ENCODE measurements at regions of chr5 and their contacts with region 1.

Region 1: DNA sequence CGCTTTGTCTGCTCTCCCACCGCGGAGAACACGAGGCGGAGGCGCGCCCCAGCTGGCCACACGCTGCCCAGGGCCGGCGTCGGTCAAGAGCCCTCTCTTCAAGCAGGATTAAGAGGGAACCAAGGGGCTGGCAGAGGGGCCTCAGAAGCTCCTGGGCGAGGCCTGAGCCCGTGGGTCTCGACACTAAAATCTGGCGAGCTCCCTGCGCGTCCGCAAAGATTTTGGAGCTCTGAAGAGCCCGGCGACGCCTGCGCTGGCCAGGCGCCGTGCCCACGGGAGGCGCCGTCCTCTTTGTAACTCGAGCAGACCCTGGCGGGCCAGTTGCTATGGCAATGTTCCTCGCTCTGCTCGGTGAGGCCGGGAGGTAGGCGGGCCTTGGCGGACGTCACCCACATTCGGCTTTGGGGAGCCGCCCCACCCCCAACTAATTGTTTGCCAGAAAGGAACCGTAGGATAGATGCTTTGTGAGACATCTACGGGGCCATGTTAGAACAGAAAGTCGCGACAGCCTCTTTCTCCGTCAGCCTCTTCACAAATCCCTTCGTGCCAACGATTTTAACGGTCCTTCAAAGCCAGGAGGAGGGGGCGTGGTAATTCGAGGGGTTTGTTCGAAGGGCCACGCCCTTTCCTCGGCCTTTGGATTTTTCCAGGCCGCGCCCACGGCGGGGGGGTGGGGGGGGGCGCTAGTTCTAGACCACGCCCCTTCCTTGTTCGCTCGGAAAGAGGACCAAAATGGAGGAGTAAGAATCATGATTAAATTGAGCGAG is 714 bp upstream of the CNOT8 start:
- DNase-seq: peak; percentile 87 to 95 (median 91)
- H3K4me3 ChIP-seq: peak overlapping the region; percentile 78 to 88
- H3K4me3 Mint-ChIP-seq: peak overlapping the region; percentile 89 to 97 (median 91)
- H3K27ac ChIP-seq: peak overlapping the region; percentile 94
- H3K27ac Mint-ChIP-seq: peak overlapping the region; percentile 93 to 99 (median 98)
- H3K4me1 ChIP-seq: peaks cover 36% of the 10 kb centered on the region
- H3K4me1 Mint-ChIP-seq: peaks cover 25 to 49% (median 33%) of the 10 kb centered on the region in 4 donors
- H3K27me3 ChIP-seq: no peaks in the 10 kb centered on the region
- H3K27me3 Mint-ChIP-seq: no peaks in the 10 kb centered on the region

Region 2: GRCh38 chr5:154647114-154647760 is 210.5 kb before region 1 on chr5:
- CTCF ChIA-PET with region 1: interaction called, 5 read pairs
- POLR2A ChIA-PET with region 1: interaction called, 4 read pairs
- intact Hi-C with region 1: loop called (anchors 1 kb)
- DNase-seq: no peak
- H3K4me3 ChIP-seq: peak overlapping the region in 1 of 2 donors; percentile 40
- H3K4me3 Mint-ChIP-seq: peak overlapping the region; percentile 69 to 85 (median 80)
- H3K27ac ChIP-seq: no peak overlapping the region
- H3K27ac Mint-ChIP-seq: peak overlapping the region in 3 of 7 donors; percentile 35 to 77 (median 47)
- H3K4me1 ChIP-seq: peaks cover 10% of the 10 kb centered on the region
- H3K4me1 Mint-ChIP-seq: peaks cover 1 to 16% (median 7%) of the 10 kb centered on the region in 4 donors
- H3K27me3 ChIP-seq: no peaks in the 10 kb centered on the region
- H3K27me3 Mint-ChIP-seq: peaks cover 13 to 24% of the 10 kb centered on the region in 2 donors

Region 3: DNA sequence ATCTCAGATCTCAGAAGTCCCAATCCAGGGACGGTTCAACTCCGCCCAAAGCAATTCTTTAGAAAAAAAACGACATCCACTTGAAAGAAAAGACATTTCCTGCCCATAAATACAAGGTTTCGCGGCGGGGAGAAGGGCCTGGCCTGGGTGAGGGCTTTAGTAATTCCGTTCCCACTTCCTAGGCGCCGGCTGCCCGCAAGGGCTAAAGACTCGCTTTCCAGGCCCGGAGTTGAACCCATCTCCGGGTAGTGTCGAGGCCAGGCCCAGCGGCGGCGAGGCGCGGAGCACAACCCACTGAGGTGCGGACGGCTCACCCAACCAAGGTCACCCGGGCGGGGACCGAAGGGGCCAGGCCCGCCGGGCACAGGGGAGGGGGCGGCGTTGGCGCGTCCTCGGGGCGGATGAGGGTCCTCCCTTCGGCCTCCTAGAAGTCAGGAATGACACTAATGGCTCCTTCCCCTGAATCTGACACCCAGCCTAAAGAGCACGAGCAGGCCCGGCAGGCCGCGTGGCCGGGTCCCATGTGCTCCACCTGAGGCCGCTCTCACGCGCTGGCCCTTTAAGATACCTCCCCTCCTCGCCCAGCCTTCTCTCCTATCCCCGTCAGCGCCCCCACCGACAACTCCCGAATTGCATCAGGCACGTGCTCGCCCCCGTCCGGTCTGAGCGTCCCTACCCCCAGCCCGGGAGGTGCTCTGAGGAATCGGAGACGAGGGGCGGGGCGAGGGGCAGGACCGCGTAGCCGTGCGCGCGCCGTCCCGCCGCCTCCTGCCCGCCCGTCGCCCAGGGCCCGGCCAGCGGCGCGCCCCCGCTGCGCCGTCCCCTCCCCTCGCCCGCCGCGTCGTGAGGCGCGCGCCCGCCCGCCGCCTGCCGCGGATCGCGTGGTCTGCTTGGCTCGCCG is 103.0 kb before region 1 on chr5:
- CTCF ChIA-PET with region 1: interaction called, 3 read pairs
- POLR2A ChIA-PET with region 1: interaction called, 19 read pairs
- intact Hi-C with region 1: loop called (anchors 1 kb)
- DNase-seq: peak; percentile 99
- H3K4me3 ChIP-seq: peak overlapping the region; percentile 4 to 91
- H3K4me3 Mint-ChIP-seq: peak overlapping the region; percentile 85 to 92 (median 87)
- H3K27ac ChIP-seq: peak overlapping the region; percentile 92
- H3K27ac Mint-ChIP-seq: peak overlapping the region; percentile 90 to 99 (median 97)
- H3K4me1 ChIP-seq: peaks cover 32% of the 10 kb centered on the region
- H3K4me1 Mint-ChIP-seq: peaks cover 27 to 55% (median 39%) of the 10 kb centered on the region in 4 donors
- H3K27me3 ChIP-seq: no peaks in the 10 kb centered on the region
- H3K27me3 Mint-ChIP-seq: no peaks in the 10 kb centered on the region

Region 4: DNA sequence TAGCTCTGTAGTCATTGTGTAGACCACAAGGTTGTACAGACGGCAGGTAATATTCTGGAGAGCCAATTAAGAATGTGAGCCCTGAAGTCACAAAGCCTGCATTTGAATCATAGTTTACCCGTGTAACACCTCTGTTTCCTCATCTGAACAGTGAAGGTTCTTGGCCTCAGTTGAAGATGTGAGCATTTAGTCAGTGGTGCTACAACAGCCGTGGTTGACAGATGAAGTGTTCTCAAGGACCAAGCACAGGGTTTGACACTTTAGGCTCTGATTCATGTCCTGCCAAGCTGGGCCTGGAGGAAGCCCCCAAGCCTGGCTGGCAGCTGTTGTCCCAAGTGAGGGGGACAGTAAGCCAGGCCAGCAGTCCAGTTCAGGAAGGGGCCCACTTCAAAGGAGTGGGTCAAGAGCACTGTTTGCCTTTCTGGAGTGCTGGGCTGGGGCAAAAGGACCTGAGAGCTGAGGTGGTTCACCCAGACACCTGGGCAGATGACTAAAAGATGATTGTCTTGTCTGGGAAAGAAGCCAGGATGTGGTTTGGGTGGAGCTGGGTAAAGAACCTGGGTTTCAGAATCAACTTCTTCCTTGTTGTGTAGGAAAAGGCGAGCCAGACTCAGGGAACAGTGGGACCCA is 28.0 kb before region 1 on chr5:
- CTCF ChIA-PET with region 1: interaction called, 5 read pairs
- POLR2A ChIA-PET with region 1: interaction called, 30 read pairs
- intact Hi-C with region 1: loop called (anchors 1 kb)
- DNase-seq: peak; percentile 23 to 47 (median 33)
- H3K4me3 ChIP-seq: peak overlapping the region; percentile 8 to 27
- H3K4me3 Mint-ChIP-seq: peak overlapping the region in 7 of 8 donors; percentile 66 to 83 (median 75)
- H3K27ac ChIP-seq: peak overlapping the region; percentile 38
- H3K27ac Mint-ChIP-seq: peak overlapping the region; percentile 70 to 94 (median 88)
- H3K4me1 ChIP-seq: peaks cover 47% of the 10 kb centered on the region
- H3K4me1 Mint-ChIP-seq: peaks cover 28 to 54% (median 39%) of the 10 kb centered on the region in 4 donors
- H3K27me3 ChIP-seq: no peaks in the 10 kb centered on the region
- H3K27me3 Mint-ChIP-seq: no peaks in the 10 kb centered on the region

Region 5: DNA sequence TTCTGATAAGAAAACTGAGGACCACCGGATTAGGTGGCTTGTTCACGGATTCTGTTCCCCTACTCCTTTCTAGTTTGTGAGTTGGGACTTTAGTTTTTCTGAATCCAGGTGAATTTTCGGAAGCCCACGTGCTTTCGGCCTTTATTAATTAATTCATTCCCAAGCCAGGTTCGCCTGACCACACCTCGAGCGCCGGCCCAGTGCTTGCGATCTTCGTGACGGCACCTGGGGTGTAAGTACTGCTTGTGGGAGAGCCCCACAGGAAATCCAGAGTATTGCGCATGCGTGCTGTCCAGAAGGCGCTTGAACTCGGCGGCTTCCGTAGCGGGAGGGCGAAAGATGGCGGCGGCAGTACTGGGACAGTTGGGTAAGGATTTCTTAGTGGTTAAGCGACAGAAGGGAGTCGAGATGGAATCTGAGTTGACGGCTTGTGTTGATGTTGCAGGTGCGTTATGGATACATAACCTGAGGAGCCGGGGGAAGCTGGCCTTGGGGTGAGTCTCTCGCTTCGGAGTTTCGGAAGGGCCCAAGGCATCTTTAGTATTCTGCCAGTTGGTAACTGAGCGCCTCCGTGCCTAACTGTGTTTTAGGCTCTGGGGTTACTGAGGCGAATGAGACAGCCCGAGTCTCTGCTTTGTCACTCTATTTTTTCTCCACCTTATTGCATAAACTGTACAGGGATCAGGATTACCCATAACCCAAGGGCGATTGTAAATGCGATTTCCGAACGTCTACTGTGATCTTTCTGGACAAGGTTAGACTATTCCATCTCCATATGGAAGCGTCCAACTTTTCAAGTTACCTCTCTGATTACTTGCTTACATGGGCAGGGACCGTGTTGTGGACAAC is 83.3 kb after region 1 on chr5 and contains the start of gene MRPL22:
- CTCF ChIA-PET with region 1: interaction called, 3 read pairs
- POLR2A ChIA-PET with region 1: interaction called, 6 read pairs
- intact Hi-C with region 1: loop called (anchors 1 kb)
- DNase-seq: peak; percentile 93 to 97 (median 94)
- H3K4me3 ChIP-seq: peak within 1 kb of the TSS; percentile 67 to 81
- H3K4me3 Mint-ChIP-seq: peak within 1 kb of the TSS; percentile 97 to 100 (median 98)
- H3K27ac ChIP-seq: peak within 1 kb of the TSS; percentile 69
- H3K27ac Mint-ChIP-seq: peak within 1 kb of the TSS; percentile 97 to 100 (median 98)
- H3K4me1 ChIP-seq: peaks cover 38% of the 10 kb centered on the region
- H3K4me1 Mint-ChIP-seq: peaks cover 29 to 60% (median 44%) of the 10 kb centered on the region in 4 donors
- H3K27me3 ChIP-seq: no peaks in the 10 kb centered on the region
- H3K27me3 Mint-ChIP-seq: no peaks in the 10 kb centered on the region
- total RNA-seq, gene MRPL22: 28.0 to 33.1 TPM

Region 6: DNA sequence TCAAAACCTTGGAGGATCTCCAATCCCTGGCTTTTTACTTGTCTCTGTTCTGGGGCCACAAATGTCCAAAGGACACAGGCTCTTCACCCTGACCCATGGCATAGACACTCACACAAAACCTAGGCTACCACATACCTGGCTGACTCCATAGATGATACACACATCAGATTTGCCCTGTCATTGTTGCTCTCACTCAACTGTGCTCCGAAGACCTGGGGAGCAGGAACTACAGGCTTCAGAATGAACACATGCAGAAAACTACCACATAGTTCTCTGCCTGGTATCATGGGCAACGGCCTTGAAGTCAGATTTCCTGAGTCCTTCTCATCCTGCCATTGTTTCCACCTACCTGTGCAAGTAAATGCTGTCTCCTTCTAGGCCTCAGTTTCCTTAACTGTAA is 382.1 kb after region 1 on chr5:
- CTCF ChIA-PET with region 1: no interaction called
- POLR2A ChIA-PET with region 1: no interaction called
- intact Hi-C with region 1: no loop called
- DNase-seq: no peak
- H3K4me3 ChIP-seq: no peak overlapping the region
- H3K4me3 Mint-ChIP-seq: no peak overlapping the region
- H3K27ac ChIP-seq: no peak overlapping the region
- H3K27ac Mint-ChIP-seq: no peak overlapping the region
- H3K4me1 ChIP-seq: no peaks in the 10 kb centered on the region
- H3K4me1 Mint-ChIP-seq: no peaks in the 10 kb centered on the region
- H3K27me3 ChIP-seq: no peaks in the 10 kb centered on the region
- H3K27me3 Mint-ChIP-seq: no peaks in the 10 kb centered on the region